CD4-positive, alpha-beta memory T cell (primary cell): ENCODE measurements at regions of chr13 and their contacts with region 1.

Region 1: GRCh38 chr13:24727731-24728601 is 36.0 kb upstream of the RNF17 start:
- DNase-seq: peak; percentile 73 to 80 (median 77)
- H3K4me3 ChIP-seq: no peak overlapping the region
- H3K4me3 Mint-ChIP-seq: no peak overlapping the region
- H3K27ac ChIP-seq: no peak overlapping the region
- H3K27ac Mint-ChIP-seq: peak overlapping the region in 2 of 7 donors; percentile 3 to 21
- H3K4me1 ChIP-seq: no peaks in the 10 kb centered on the region
- H3K4me1 Mint-ChIP-seq: no peaks in the 10 kb centered on the region
- H3K27me3 ChIP-seq: no peaks in the 10 kb centered on the region
- H3K27me3 Mint-ChIP-seq: peaks cover 7% of the 10 kb centered on the region in 2 donors

Region 2: DNA sequence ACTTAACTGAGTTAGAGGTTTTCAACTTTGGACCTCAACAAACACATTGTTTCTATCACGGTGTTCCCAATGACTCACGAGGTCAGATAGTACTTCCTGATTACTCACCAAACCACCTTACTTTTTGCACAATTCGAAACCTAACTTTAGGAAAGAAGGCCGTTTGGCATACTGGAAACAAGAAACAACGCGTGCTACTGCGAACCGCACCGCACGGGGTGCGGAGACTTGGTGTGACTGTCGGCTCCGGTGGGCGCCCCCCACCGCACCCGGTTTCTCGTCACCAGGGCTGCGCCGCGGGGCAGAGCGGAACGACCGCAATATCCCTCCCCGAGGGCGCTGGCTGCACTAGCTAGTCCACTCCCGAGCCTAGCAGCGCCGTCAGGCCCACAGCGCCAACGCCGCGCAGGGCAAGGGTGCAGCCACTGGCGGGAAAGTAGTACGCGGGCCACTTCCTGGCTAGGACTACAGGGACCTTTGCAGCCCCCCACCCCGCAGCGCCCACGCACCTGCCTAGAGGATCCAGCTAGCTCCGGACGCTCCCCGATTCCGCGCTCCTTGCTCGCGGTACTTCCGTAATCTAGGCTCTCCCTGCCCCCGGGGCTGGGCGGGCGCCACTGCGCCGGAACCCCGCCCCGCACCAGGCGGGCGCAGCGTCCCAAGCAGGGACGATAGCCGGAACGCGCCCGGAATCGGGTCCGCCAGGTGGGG is 215.6 kb before region 1 on chr13 and contains the start of gene PARP4:
- CTCF ChIA-PET with region 1: no interaction called
- POLR2A ChIA-PET with region 1: no interaction called
- intact Hi-C with region 1: loop called (anchors 5 kb)
- DNase-seq: peak; percentile 63 to 74 (median 72)
- H3K4me3 ChIP-seq: peak within 1 kb of the TSS; percentile 59
- H3K4me3 Mint-ChIP-seq: peak within 1 kb of the TSS; percentile 83 to 94 (median 92)
- H3K27ac ChIP-seq: peak within 1 kb of the TSS; percentile 77
- H3K27ac Mint-ChIP-seq: peak within 1 kb of the TSS; percentile 88 to 97 (median 92)
- H3K4me1 ChIP-seq: peaks cover 18% of the 10 kb centered on the region
- H3K4me1 Mint-ChIP-seq: peaks cover 18 to 46% (median 33%) of the 10 kb centered on the region in 4 donors
- H3K27me3 ChIP-seq: no peaks in the 10 kb centered on the region
- H3K27me3 Mint-ChIP-seq: no peaks in the 10 kb centered on the region
- total RNA-seq, gene PARP4: 90.0 to 92.9 TPM

Region 3: DNA sequence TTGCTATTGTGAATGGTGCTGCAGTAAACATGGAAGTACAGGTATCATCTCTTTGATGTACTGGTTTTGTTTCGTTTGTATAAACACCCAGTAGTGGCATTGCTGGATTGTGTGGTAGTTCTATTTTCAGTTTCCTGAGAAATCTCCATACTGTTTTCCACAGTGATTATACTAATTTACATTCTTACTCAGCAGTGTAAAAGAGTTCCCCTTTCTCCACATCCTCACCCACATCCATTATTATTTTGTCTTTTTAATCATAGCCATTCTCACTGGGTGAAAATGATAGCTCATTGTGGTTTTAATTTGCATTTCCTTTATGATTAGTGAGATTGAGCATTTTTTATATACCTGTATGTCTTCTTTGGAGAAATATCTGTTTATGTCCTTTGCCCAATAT is 153.1 kb before region 1 on chr13:
- CTCF ChIA-PET with region 1: interaction called, 25 read pairs
- POLR2A ChIA-PET with region 1: no interaction called
- intact Hi-C with region 1: loop called (anchors 1 kb)
- DNase-seq: no peak
- H3K4me3 ChIP-seq: no peak overlapping the region
- H3K4me3 Mint-ChIP-seq: no peak overlapping the region
- H3K27ac ChIP-seq: no peak overlapping the region
- H3K27ac Mint-ChIP-seq: no peak overlapping the region
- H3K4me1 ChIP-seq: no peaks in the 10 kb centered on the region
- H3K4me1 Mint-ChIP-seq: no peaks in the 10 kb centered on the region
- H3K27me3 ChIP-seq: no peaks in the 10 kb centered on the region
- H3K27me3 Mint-ChIP-seq: peaks cover 0 to 6% of the 10 kb centered on the region in 2 donors

Region 4: GRCh38 chr13:24683838-24684599 is 43.9 kb before region 1 on chr13:
- CTCF ChIA-PET with region 1: interaction called, 33 read pairs
- POLR2A ChIA-PET with region 1: interaction called, 3 read pairs
- intact Hi-C with region 1: loop called (anchors 1 kb)
- DNase-seq: peak; percentile 45 to 56 (median 54)
- H3K4me3 ChIP-seq: peak overlapping the region in 1 of 2 donors; percentile 11
- H3K4me3 Mint-ChIP-seq: peak overlapping the region in 6 of 8 donors; percentile 40 to 71 (median 62)
- H3K27ac ChIP-seq: no peak overlapping the region
- H3K27ac Mint-ChIP-seq: peak overlapping the region in 6 of 7 donors; percentile 2 to 54 (median 40)
- H3K4me1 ChIP-seq: peaks cover 31% of the 10 kb centered on the region
- H3K4me1 Mint-ChIP-seq: peaks cover 22 to 44% (median 34%) of the 10 kb centered on the region in 4 donors
- H3K27me3 ChIP-seq: peaks cover 13% of the 10 kb centered on the region
- H3K27me3 Mint-ChIP-seq: peaks cover 19% of the 10 kb centered on the region in 2 donors

Region 5: GRCh38 chr13:24693862-24694471 is 34.0 kb before region 1 on chr13:
- CTCF ChIA-PET with region 1: interaction called, 34 read pairs
- POLR2A ChIA-PET with region 1: no interaction called
- intact Hi-C with region 1: loop called (anchors 1 kb)
- DNase-seq: peak; percentile 30 to 47 (median 42)
- H3K4me3 ChIP-seq: no peak overlapping the region
- H3K4me3 Mint-ChIP-seq: peak overlapping the region in 7 of 8 donors; percentile 17 to 84 (median 59)
- H3K27ac ChIP-seq: no peak overlapping the region
- H3K27ac Mint-ChIP-seq: peak overlapping the region in 1 of 7 donors; percentile 64
- H3K4me1 ChIP-seq: peaks cover 7% of the 10 kb centered on the region
- H3K4me1 Mint-ChIP-seq: peaks cover 3 to 13% (median 7%) of the 10 kb centered on the region in 4 donors
- H3K27me3 ChIP-seq: no peaks in the 10 kb centered on the region
- H3K27me3 Mint-ChIP-seq: peaks cover 10 to 39% of the 10 kb centered on the region in 2 donors

Region 6: DNA sequence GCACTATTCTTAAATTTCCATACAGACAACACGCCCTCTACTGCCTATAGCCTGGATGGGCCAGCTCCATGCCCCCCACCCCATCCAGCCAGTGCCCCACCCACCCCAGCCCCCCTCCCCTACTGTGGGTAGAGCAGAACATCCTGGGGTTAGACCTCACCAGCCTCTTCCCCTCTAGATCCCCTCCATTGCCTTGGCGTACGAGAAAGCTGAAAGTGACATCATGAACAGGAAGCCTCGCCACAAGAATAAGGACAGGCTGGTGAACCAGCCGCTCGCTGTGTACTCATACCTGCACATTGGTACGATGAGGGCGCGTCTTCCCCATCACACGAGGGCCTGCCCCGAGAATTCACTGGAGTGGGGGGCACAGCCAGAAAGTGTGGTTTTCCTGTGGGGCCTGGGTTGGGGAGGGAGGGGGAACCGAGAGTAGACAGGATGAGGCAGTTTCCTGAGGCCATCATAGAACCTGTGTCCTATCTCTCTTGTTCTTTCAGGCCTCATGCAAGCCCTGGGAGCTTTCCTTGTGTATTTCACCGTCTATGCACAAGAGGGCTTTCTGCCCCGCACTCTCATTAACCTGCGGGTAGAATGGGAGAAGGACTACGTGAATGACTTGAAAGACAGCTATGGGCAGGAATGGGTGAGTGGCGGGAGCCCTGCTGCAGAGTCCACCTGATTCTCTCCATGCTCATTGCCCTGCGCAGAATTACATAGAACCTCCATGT is 18.6 kb before region 1 on chr13:
- CTCF ChIA-PET with region 1: interaction called, 20 read pairs
- POLR2A ChIA-PET with region 1: no interaction called
- intact Hi-C with region 1: no loop called
- DNase-seq: peak; percentile 68 to 87 (median 78)
- H3K4me3 ChIP-seq: peak overlapping the region in 1 of 2 donors; percentile 11
- H3K4me3 Mint-ChIP-seq: peak overlapping the region; percentile 52 to 82 (median 70)
- H3K27ac ChIP-seq: no peak overlapping the region
- H3K27ac Mint-ChIP-seq: peak overlapping the region; percentile 81 to 90 (median 86)
- H3K4me1 ChIP-seq: peaks cover 13% of the 10 kb centered on the region
- H3K4me1 Mint-ChIP-seq: peaks cover 12 to 16% (median 13%) of the 10 kb centered on the region in 4 donors
- H3K27me3 ChIP-seq: no peaks in the 10 kb centered on the region
- H3K27me3 Mint-ChIP-seq: peaks cover under 1 to 1% of the 10 kb centered on the region in 2 donors

Region 7: DNA sequence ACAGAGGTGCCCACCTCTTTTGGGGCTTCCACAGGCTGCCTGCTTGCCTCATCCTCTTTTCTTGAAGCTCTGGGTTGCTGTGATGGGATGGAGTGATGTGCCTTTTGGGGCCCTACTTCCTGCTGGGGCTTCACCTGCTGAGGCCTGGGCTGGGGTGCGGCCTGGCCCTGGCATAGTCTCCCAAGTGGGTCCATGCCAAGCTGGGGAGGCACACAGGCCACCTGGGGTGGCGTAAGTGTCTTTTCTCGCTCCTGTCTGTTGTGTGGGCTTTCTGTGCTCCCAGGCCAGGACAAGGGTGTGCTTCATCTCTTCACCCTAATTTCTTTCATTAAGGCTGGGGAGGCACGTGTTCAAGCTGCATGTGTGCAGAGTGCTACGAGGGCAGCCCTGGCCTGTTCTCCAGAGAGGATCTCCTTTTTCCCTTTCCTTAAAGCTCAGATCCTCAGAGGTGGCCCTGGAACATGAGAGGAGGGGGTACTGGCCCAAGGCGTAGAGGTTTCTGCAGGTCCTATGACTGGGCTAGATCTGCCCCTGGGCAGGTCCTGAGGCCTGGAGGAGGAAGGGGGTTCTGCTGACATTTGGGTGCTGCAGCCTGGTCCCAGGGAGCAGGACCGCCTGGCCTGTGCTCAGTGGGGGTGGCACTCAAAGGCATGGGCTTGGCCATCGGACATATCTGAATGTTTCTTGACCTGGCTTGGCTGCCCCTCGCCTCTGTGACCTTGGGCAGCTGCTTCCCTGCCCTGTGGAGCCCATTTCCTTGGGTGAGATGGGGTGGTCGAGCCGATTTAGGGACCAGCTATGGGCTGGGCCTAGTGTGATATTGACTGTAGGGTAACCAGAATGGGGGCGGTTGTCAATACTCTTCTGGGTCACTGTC is 12.3 kb after region 1 on chr13:
- CTCF ChIA-PET with region 1: interaction called, 10 read pairs
- POLR2A ChIA-PET with region 1: interaction called, 3 read pairs
- intact Hi-C with region 1: no loop called
- DNase-seq: no peak
- H3K4me3 ChIP-seq: no peak overlapping the region
- H3K4me3 Mint-ChIP-seq: no peak overlapping the region
- H3K27ac ChIP-seq: no peak overlapping the region
- H3K27ac Mint-ChIP-seq: peak overlapping the region in 1 of 7 donors; percentile 18
- H3K4me1 ChIP-seq: no peaks in the 10 kb centered on the region
- H3K4me1 Mint-ChIP-seq: no peaks in the 10 kb centered on the region
- H3K27me3 ChIP-seq: no peaks in the 10 kb centered on the region
- H3K27me3 Mint-ChIP-seq: peaks cover 5 to 13% of the 10 kb centered on the region in 2 donors